ENCODE measurements at regions of chr1 and their contacts with region 1.

Region 1: DNA sequence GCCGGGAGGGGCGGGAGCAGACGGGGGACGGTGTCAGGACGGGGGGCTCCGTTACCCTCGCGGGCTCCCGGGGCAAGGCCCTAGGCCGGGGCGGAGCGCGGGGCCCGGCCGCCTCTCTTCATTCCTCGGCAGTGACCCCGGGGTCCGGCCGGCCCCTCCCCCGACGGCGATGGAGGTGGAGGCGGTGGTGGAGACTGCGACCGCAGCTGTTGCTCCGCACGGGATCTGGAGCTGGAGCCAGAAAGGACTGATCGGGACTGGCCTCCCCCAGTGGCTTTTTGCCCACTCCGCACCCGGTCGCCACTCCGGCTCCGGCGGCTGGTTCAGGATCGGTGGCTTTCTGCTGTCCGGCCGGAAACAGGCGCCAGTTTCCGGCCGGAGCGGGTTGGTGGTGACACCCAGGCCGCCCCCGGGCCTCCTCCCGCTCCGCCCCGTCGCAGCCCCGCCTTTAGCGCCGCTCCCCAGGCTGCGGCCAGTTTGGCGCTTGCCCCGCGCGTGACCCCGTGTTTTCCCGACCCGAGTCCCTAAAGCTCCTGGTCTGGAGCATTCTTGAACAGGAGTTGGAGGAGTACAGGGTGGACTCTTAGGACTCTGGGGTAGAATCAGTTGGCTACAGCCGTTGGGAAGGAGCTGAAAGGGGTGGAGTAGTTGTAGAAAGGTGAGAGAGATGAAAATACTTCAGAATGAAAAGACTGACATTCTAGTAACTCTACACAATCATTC is at the start of gene OTUD7B:
- DNase-seq: peak; percentile 91
- H3K4me3 Mint-ChIP-seq: peak within 1 kb of the TSS; percentile 95
- H3K27ac Mint-ChIP-seq: peak within 1 kb of the TSS; percentile 95
- H3K4me1 Mint-ChIP-seq: peaks cover 29% of the 10 kb centered on the region
- H3K27me3 Mint-ChIP-seq: no peaks in the 10 kb centered on the region
- CTCF ChIP-seq: no peak
- total RNA-seq, gene OTUD7B: 44.3 and 47.4 TPM in 2 replicates

Region 2: DNA sequence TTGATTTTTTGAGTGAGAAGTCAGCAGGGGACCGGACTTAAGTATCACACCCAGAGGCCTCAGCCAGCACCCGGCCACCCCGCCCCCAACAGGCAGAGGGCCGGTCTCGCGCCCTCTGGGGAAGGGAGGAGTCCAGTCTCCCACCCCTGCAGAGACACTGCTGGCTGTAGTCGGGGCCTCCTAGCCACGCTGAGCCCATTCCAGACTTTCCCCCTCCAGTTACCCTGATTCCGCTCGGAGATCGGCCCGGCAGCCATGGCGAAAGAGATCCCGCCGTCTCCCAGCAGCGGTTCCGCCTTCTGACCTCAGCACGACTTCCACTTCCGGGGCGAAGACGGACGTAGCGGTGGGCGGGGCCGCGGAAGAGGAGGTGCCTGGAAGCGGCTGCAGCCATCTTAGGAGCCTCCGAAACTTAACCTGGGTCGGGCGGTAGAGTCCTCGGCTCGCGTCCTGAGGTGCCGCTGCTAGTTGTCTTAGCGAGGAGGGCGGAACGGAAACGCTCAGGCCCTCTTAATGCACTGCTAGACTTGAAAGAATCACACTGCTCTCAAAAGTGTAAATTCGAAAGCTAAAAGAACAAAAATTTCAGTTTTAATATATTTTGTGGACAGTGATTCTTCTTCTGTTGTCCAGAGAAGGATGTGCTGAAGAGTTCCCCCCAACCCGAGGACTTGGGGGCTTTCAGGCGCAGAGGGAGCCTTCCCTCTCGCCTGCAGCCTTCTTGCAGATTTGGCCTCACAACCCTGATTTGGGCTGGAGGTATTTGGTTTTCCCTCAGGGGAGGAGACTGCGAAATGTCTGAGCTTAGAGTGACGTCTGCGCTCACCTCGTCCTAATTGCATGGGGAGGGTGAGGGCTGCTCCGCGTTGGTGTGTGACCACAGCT is 82.8 kb before region 1 on chr1 and contains the start of gene SF3B4:
- CTCF ChIA-PET with region 1: interaction called, 4 read pairs
- POLR2A ChIA-PET with region 1: interaction called, 43 read pairs
- intact Hi-C with region 1: no loop called
- DNase-seq: peak; percentile 98
- H3K4me3 Mint-ChIP-seq: peak within 1 kb of the TSS; percentile 99
- H3K27ac Mint-ChIP-seq: peak within 1 kb of the TSS; percentile 87
- H3K4me1 Mint-ChIP-seq: peaks cover 71% of the 10 kb centered on the region
- H3K27me3 Mint-ChIP-seq: no peaks in the 10 kb centered on the region
- CTCF ChIP-seq: no peak
- total RNA-seq, gene SF3B4: 79.2 and 99.2 TPM in 2 replicates

Region 3: DNA sequence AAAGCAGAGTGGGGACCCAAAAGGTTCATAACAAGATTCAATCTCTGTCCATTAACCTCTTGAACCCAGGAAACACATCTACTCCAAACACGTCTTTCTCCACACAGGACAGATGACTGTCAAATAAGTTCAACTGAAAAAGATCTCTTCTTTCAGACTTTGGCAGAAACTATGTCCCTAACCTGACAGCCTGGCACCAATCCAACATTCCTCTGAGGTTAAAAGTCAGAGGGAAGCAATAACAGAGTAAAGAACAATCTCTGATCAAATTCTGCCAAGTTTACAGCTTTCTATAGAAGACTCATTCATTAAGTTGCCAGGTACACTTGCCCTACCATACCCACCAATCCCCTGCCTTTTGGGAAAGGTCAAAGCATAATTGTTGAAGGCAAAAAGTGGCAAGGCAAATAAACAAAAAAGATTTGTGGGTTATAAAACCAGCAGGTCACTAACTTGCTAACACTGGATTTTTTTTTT is 32.0 kb before region 1 on chr1:
- CTCF ChIA-PET with region 1: interaction called, 3 read pairs
- POLR2A ChIA-PET with region 1: interaction called, 96 read pairs
- intact Hi-C with region 1: no loop called
- DNase-seq: peak; percentile 59
- H3K4me3 Mint-ChIP-seq: no peak overlapping the region
- H3K27ac Mint-ChIP-seq: peak overlapping the region; percentile 5
- H3K4me1 Mint-ChIP-seq: peaks cover 13% of the 10 kb centered on the region
- H3K27me3 Mint-ChIP-seq: no peaks in the 10 kb centered on the region
- CTCF ChIP-seq: no peak

Region 4: GRCh38 chr1:150021191-150021694 is 10.7 kb after region 1 on chr1:
- CTCF ChIA-PET with region 1: interaction called, 4 read pairs
- POLR2A ChIA-PET with region 1: interaction called, 123 read pairs
- intact Hi-C with region 1: no loop called
- DNase-seq: no peak
- H3K4me3 Mint-ChIP-seq: no peak overlapping the region
- H3K27ac Mint-ChIP-seq: peak overlapping the region; percentile 65
- H3K4me1 Mint-ChIP-seq: peaks cover 10% of the 10 kb centered on the region
- H3K27me3 Mint-ChIP-seq: no peaks in the 10 kb centered on the region
- CTCF ChIP-seq: no peak

Region 5: GRCh38 chr1:150061632-150062101 is 51.1 kb after region 1 on chr1:
- CTCF ChIA-PET with region 1: interaction called, 5 read pairs
- POLR2A ChIA-PET with region 1: interaction called, 127 read pairs
- intact Hi-C with region 1: no loop called
- DNase-seq: peak; percentile 80
- H3K4me3 Mint-ChIP-seq: no peak overlapping the region
- H3K27ac Mint-ChIP-seq: peak overlapping the region; percentile 70
- H3K4me1 Mint-ChIP-seq: peaks cover 24% of the 10 kb centered on the region
- H3K27me3 Mint-ChIP-seq: no peaks in the 10 kb centered on the region
- CTCF ChIP-seq: no peak

Region 6: GRCh38 chr1:150235852-150236613 is 225.5 kb after region 1 on chr1 and contains the start of gene ANP32E:
- CTCF ChIA-PET with region 1: no interaction called
- POLR2A ChIA-PET with region 1: interaction called, 14 read pairs
- intact Hi-C with region 1: no loop called
- DNase-seq: peak; percentile 100
- H3K4me3 Mint-ChIP-seq: no peak within 1 kb of the TSS
- H3K27ac Mint-ChIP-seq: no peak within 1 kb of the TSS
- H3K4me1 Mint-ChIP-seq: peaks cover 11% of the 10 kb centered on the region
- H3K27me3 Mint-ChIP-seq: no peaks in the 10 kb centered on the region
- CTCF ChIP-seq: no peak
- total RNA-seq, gene ANP32E: 56.5 and 67.3 TPM in 2 replicates

Region 7: DNA sequence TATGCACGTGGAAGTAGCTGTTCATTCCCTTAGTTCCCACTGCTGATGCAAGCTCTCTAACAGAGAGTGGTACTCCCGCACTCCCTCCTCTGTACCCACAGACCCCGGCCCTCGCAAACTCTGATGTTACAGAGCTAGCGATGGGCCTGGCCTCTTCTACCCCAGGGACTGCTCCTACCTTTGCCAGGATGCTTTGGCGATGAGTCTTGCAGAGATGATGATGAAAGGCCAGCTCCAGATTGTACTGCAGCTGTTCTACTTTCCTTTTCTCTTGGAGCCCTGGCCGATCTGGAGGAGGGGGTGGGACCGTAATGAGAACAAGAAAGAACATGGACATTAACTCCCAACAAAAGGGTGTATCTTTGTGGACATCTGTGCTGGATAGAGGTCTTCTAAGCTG is 1800.6 kb after region 1 on chr1:
- CTCF ChIA-PET with region 1: no interaction called
- POLR2A ChIA-PET with region 1: no interaction called
- intact Hi-C with region 1: no loop called
- DNase-seq: no peak
- H3K4me3 Mint-ChIP-seq: no peak overlapping the region
- H3K27ac Mint-ChIP-seq: peak overlapping the region; percentile 3
- H3K4me1 Mint-ChIP-seq: no peaks in the 10 kb centered on the region
- H3K27me3 Mint-ChIP-seq: peaks cover 25% of the 10 kb centered on the region
- CTCF ChIP-seq: no peak